ENCODE measurements at regions of chr4 and their contacts with region 1.

Region 1: GRCh38 chr4:83438719-83439118 is 16.9 kb downstream of the HELQ start:
- DNase-seq: peak; percentile 1
- ATAC-seq: no peak
- H3K4me3 ChIP-seq: no peak overlapping the region
- H3K27ac ChIP-seq: no peak overlapping the region
- H3K4me1 ChIP-seq: no peaks in the 10 kb centered on the region
- H3K27me3 ChIP-seq: no peaks in the 10 kb centered on the region
- CTCF ChIP-seq: no peak

Region 2: GRCh38 chr4:83362492-83363329 is 76.0 kb before region 1 on chr4:
- CTCF ChIA-PET with region 1: no interaction called
- POLR2A ChIA-PET with region 1: no interaction called
- intact Hi-C with region 1: loop called (anchors 10 kb)
- DNase-seq: peak; percentile 38
- ATAC-seq: peak; percentile 84
- H3K4me3 ChIP-seq: no peak overlapping the region
- H3K27ac ChIP-seq: no peak overlapping the region
- H3K4me1 ChIP-seq: peaks cover 11% of the 10 kb centered on the region
- H3K27me3 ChIP-seq: no peaks in the 10 kb centered on the region
- CTCF ChIP-seq: peak; percentile 69